Activated CD4-positive, alpha-beta memory T cell treated with anti-CD3 and anti-CD28 coated beads for 36 hours (primary cell): ENCODE measurements at regions of chr15 and their contacts with region 1.

Region 1: GRCh38 chr15:72231066-72231846 is at the start of gene PKM:
- DNase-seq: peak; percentile 97
- H3K4me3 Mint-ChIP-seq: peak within 1 kb of the TSS; percentile 94
- H3K27ac Mint-ChIP-seq: peak within 1 kb of the TSS; percentile 98
- H3K4me1 Mint-ChIP-seq: peaks cover 27% of the 10 kb centered on the region
- H3K27me3 Mint-ChIP-seq: no peaks in the 10 kb centered on the region
- total RNA-seq, gene PKM: 2,032 to 2,053 TPM

Region 2: DNA sequence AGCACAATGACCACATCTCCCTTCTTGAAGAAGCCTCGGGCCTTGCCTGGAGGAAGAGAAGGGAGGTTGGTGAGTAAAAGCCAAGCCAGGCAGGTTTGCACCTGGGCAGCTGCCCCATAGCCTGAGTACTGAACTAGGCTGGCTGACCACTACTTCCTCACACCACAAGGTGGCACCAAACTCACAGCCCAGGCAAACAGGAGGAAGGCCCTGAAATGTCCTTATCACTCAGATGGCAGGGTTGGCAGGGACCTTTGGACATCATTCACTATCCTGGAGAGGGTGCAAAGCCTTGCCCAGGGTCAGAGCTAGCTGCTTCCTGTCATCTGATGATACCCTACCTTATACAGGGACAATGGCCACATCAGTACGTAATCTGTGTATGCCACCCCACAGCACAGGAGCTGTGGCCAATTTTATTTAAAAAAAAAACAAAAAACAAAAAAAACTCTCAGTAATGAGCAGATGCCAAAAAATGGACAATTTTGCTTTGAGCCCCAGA is 31.5 kb before region 1 on chr15:
- CTCF ChIA-PET with region 1: interaction called, 65 read pairs
- POLR2A ChIA-PET with region 1: interaction called, 17 read pairs
- intact Hi-C with region 1: loop called (anchors 1 kb)
- DNase-seq: peak; percentile 82
- H3K4me3 Mint-ChIP-seq: no peak overlapping the region
- H3K27ac Mint-ChIP-seq: no peak overlapping the region
- H3K4me1 Mint-ChIP-seq: peaks cover 22% of the 10 kb centered on the region
- H3K27me3 Mint-ChIP-seq: peaks cover 11% of the 10 kb centered on the region

Region 3: GRCh38 chr15:72217216-72217615 is 14.0 kb before region 1 on chr15:
- CTCF ChIA-PET with region 1: interaction called, 16 read pairs
- POLR2A ChIA-PET with region 1: interaction called, 12 read pairs
- intact Hi-C with region 1: no loop called
- DNase-seq: no peak
- H3K4me3 Mint-ChIP-seq: no peak overlapping the region
- H3K27ac Mint-ChIP-seq: no peak overlapping the region
- H3K4me1 Mint-ChIP-seq: peaks cover 38% of the 10 kb centered on the region
- H3K27me3 Mint-ChIP-seq: no peaks in the 10 kb centered on the region

Region 4: DNA sequence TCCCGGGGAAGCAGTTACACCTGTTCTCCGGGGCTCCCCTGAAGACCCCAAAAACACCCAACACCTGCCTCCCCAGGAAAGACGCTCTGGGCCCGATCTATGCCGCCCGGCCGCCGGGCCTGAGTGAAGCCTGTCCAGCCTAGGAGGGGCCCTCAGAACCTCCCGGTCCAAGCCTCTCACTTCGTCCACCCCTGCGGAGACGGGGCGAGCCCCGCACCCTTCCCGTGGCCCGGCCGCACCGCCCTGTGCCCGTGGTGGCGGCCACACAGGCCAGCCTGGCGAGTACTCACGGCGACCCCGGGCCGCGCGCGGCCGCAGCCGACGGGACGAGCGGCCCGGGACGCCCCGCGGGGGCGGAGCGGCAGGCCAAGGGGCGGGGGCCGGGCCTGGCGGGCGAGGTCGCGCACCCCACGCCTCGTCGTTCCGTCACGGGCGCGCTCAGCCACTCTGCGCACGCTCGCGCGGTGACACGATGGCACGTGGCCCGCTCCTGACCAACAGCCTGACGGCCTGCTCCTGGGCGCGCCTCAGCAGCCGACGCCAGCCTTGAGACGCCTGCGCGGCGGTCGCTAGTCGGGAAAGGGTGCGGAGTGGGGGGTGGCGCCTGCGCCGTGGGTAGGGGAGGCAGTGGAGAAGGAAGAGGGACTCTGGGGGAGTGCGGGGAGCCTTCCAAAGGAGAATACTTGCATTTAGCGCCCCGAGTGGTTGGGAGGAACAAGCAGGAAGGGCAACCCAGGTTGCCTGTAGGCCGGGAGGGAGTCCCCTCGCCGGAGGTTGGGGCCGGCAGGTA is 41.2 kb after region 1 on chr15 and contains the start of gene PARP6:
- CTCF ChIA-PET with region 1: interaction called, 19 read pairs
- POLR2A ChIA-PET with region 1: interaction called, 28 read pairs
- intact Hi-C with region 1: loop called (anchors 1 kb)
- DNase-seq: peak; percentile 99
- H3K4me3 Mint-ChIP-seq: peak within 1 kb of the TSS; percentile 84
- H3K27ac Mint-ChIP-seq: peak within 1 kb of the TSS; percentile 89
- H3K4me1 Mint-ChIP-seq: peaks cover 33% of the 10 kb centered on the region
- H3K27me3 Mint-ChIP-seq: no peaks in the 10 kb centered on the region
- total RNA-seq, gene PARP6: 42.8 to 44.5 TPM

Region 5: DNA sequence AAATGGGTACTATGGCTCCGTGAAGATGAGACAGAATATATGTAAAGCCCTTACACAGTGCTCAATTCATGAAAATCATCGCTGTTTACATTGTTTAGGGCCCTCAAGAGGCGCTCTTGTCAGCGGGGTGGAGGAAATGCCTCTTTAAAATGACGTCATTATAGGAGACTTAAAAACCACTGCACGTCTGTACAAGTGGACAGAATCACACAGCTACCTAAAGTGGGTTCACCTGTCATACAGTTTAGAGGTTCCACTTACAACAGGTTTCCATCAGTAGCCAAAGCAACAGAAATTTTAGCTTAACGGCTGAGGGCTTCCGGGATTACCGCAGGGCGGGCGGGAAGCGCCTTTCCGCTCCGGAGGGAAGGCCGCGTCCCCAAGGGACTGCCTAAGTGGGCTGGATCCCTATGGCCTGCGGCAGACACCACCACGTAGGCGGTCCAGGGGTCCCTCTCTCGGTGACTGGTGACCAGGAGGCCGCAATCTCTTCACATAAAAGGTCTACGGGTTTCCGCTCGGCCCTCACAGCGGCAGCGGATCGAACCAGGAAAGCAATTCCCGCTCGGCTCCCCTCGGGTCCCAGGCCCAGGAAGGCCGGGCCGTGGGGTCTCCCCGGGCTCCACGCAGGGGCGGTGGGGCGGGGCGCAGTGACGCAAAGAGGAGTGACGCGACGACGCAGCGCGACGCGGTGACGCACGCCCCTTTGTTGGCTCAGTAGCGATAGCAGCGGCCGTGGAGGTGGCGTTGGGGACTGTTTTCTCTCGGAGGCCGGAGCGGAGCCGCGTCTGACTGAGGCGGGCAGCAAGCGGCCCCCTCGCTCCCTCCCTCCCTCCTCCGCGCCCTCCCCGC is 242.6 kb after region 1 on chr15 and contains the start of gene ARIH1:
- CTCF ChIA-PET with region 1: interaction called, 5 read pairs
- POLR2A ChIA-PET with region 1: interaction called, 31 read pairs
- intact Hi-C with region 1: loop called (anchors 2 kb)
- DNase-seq: peak; percentile 96
- H3K4me3 Mint-ChIP-seq: peak within 1 kb of the TSS; percentile 92
- H3K27ac Mint-ChIP-seq: peak within 1 kb of the TSS; percentile 98
- H3K4me1 Mint-ChIP-seq: peaks cover 41% of the 10 kb centered on the region
- H3K27me3 Mint-ChIP-seq: no peaks in the 10 kb centered on the region
- total RNA-seq, gene ARIH1: 169 to 187 TPM